ENCODE measurements at regions of chr9 and their contacts with region 1.

Region 1: DNA sequence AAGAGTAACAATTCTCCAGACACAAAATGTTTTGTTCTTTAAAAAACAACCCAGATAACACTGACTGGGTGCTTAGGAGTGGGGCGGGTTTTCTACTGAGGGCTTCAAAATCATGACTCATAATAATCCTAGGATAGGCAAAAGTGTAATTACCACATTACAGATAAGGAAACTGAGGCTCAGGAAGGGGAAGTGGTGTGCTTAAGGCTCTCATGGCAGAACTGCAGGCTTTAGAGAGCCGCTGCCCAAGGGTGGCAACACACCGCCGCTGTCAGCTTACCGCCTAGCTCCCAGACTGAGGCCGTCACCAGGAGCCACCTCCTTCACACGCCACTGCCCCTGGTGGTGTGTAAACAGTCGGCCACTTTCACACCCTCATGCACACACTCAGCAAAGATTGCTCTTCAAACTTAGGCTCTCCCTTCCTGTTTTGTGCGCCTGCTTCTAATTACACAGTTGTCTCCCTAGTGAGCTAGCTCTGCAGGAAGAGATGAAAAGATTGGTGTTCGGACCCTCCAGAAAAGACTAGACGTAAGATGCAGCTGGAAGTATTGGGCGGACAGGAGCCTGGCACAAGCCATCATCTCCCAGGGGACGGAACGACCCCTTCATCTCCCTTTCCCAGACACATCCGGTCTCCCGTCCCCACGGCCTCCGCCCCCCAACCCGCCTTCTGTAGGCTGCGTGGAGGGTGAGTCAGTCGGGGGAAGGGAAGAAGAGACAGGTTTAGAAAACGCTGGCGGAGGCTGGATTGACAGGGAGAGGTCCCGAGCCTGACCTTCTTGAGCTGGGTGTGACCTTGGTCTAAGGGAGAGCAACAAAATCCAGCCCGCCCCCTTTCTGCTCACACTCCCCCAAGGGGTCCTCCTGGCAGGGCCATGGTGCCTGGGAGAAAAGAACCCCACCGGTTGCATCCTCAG is 162.7 kb downstream of the SYK start:
- DNase-seq: peak in 1 of 2 donors; percentile 83
- H3K4me3 ChIP-seq: peak overlapping the region; percentile 20 to 58
- H3K27ac ChIP-seq: peak overlapping the region; percentile 82 to 93
- H3K4me1 ChIP-seq: peaks cover 6 to 17% of the 10 kb centered on the region in 2 donors
- H3K27me3 ChIP-seq: no peaks in the 10 kb centered on the region
- CTCF ChIP-seq: peak; percentile 32 to 42 (median 33)

Region 2: DNA sequence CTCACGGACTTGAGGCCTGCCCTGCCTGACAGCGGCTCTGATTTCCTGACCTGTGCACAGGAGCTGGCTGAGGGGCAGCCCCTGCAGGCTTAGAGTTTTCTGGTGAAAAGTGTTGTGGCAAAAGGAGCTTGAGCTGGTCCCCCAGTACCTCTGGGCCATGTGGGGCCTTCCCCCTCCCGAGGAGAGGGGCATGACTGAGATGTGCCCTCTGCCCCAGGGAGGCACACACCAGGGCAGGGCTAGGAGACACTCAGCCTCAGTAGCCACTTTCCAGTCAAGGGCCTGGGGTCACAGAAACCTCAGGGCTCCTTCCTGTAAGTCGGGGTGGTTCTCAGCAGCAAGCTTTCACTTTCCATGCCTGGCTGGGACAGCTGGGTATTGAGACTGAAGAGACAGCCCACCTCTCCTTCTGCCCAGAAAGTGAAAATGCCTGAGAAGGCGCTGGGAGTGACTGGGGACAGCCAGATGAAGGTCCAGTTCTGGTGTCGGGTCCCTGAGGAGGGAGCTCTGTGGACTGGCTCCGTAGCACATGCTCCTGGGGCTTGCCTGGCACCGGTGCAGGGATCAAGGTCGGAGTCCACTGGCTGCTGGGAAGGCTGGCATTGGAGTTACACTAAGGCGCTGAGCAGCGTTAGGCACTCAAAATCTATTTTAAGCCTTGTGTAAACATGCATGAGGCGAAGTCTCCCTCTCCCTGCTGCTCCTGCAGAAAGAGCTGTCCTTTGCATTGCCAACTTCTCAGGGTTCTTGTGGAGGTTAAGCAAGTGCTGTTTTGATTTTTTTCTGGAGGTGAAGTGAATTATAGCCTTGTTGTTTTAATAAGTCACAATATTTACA is 964.6 kb before region 1 on chr9:
- intact Hi-C with region 1: loop called (anchors 10 kb)
- DNase-seq: peak in 1 of 2 donors; percentile 82
- H3K4me3 ChIP-seq: peak overlapping the region; percentile 43 to 61
- H3K27ac ChIP-seq: peak overlapping the region; percentile 78 to 80
- H3K4me1 ChIP-seq: peaks cover 24 to 37% of the 10 kb centered on the region in 2 donors
- H3K27me3 ChIP-seq: no peaks in the 10 kb centered on the region
- CTCF ChIP-seq: no peak

Region 3: GRCh38 chr9:90801583-90802289 is 162.6 kb before region 1 on chr9 and contains the start of gene SYK:
- intact Hi-C with region 1: no loop called
- DNase-seq: peak in 1 of 2 donors; percentile 74
- H3K4me3 ChIP-seq: peak within 1 kb of the TSS; percentile 4 to 55
- H3K27ac ChIP-seq: peak within 1 kb of the TSS; percentile 47 to 58
- H3K4me1 ChIP-seq: peaks cover 0 to 4% of the 10 kb centered on the region in 2 donors
- H3K27me3 ChIP-seq: no peaks in the 10 kb centered on the region
- CTCF ChIP-seq: no peak
- total RNA-seq, gene SYK: 3.2 TPM

Region 4: DNA sequence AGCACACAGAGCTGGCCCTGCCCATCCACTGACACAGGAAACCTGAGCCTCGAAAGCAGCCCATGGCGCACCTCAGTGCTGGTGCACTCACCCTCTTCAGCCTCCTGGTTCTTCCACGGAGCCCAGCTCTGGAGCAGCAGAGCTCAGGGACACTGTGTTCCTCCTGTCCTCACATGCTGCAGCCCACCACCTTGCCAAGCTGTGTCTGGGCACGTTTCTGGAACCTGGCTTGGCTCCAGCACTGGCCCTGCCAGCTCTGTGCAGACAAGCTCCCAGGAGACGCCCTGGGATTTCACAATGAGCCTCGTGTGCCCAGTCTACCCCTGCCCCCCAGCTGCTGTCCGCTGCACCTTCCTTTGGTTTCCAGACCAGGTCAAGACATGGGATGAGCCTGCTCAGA is 43.2 kb before region 1 on chr9:
- intact Hi-C with region 1: loop called (anchors 1 kb)
- DNase-seq: peak; percentile 70 to 95
- H3K4me3 ChIP-seq: no peak overlapping the region
- H3K27ac ChIP-seq: peak overlapping the region; percentile 77 to 80
- H3K4me1 ChIP-seq: peaks cover 6 to 25% of the 10 kb centered on the region in 2 donors
- H3K27me3 ChIP-seq: no peaks in the 10 kb centered on the region
- CTCF ChIP-seq: no peak

Region 5: DNA sequence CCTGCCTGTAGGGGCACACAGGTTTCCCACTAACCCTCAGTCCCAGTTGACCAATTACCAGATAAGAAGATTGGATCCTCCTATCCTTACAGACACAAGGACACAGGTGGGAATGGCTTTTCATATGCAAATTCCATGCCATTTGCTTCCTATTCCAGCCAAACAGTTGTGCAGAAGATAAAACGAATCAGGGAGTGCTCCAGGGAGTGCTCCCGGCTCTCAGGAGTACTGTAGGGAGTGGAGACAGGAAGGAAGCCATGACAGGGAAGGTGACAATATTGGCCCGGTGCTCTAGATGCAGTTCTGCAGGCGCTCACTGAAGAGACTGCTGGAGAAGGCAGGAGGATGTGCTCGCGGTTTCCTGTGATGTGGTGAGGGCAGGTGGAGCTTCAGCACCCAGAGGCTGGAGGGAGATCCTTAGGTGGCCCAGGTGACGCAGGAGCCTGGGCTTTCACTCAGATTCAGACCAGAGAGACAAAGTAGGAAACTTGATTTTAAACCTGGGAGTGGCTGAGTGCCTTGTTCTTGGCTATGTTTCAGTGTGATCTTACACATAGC is 137.3 kb after region 1 on chr9:
- intact Hi-C with region 1: loop called (anchors 5 kb)
- DNase-seq: no peak
- H3K4me3 ChIP-seq: no peak overlapping the region
- H3K27ac ChIP-seq: peak overlapping the region; percentile 82 to 85
- H3K4me1 ChIP-seq: peaks cover 8 to 17% of the 10 kb centered on the region in 2 donors
- H3K27me3 ChIP-seq: no peaks in the 10 kb centered on the region
- CTCF ChIP-seq: no peak

Region 6: DNA sequence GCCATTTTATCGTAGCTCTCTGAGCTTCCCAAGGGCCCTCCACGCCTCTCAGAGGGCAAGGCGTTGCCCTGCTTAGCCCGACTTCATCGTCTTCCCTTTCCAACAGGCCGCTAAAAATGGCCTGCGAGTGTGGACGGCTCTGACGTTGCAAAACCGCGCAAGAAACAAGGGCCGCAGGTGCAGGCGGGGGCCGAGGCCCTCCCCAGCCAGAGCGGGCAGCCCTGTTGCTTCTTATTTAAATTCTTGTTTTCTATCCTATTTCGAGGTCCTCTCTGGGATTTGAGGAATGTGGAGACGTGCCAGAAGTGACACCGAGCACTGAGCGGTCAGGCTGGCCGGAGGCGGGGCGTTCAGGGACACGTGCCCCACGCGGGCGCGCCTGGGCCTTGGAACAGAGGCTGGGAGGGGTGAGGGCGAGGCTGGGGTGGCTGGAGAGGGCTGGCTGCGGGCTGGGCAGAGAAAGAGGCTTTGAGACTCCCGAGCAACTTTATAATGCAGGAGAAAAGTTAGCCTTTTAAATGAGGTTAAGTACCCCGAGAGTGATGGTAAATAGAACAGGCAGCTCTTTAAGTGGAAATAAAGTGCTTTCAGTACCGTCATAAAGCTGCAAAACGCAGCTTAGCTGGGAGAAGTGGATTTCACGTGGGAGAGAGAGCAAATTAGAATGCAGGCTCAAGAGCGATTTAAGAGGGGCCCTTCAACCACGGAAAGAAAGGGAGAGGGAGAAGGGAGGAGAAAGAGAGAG is 153.8 kb after region 1 on chr9:
- intact Hi-C with region 1: loop called (anchors 5 kb)
- DNase-seq: peak; percentile 58 to 93
- H3K4me3 ChIP-seq: peak overlapping the region; percentile 37 to 57
- H3K27ac ChIP-seq: peak overlapping the region; percentile 83 to 86
- H3K4me1 ChIP-seq: peaks cover 12 to 29% of the 10 kb centered on the region in 2 donors
- H3K27me3 ChIP-seq: no peaks in the 10 kb centered on the region
- CTCF ChIP-seq: no peak

Region 7: GRCh38 chr9:91361291-91362050 is 397.1 kb after region 1 on chr9 and contains the start of gene AUH:
- intact Hi-C with region 1: loop called (anchors 5 kb)
- DNase-seq: peak; percentile 38 to 89
- H3K4me3 ChIP-seq: peak within 1 kb of the TSS; percentile 89 to 96
- H3K27ac ChIP-seq: peak within 1 kb of the TSS; percentile 86 to 88
- H3K4me1 ChIP-seq: peaks cover 0 to 7% of the 10 kb centered on the region in 2 donors
- H3K27me3 ChIP-seq: no peaks in the 10 kb centered on the region
- CTCF ChIP-seq: no peak
- total RNA-seq, gene AUH: 46.2 TPM

Region 8: GRCh38 chr9:91483189-91483691 is 518.9 kb after region 1 on chr9:
- intact Hi-C with region 1: loop called (anchors 2 kb)
- DNase-seq: peak; percentile 29 to 85
- H3K4me3 ChIP-seq: peak overlapping the region in 1 of 2 donors; percentile 34
- H3K27ac ChIP-seq: peak overlapping the region; percentile 76 to 84
- H3K4me1 ChIP-seq: peaks cover 0 to 7% of the 10 kb centered on the region in 2 donors
- H3K27me3 ChIP-seq: no peaks in the 10 kb centered on the region
- CTCF ChIP-seq: no peak